ENCODE measurements at regions of chr2 and their contacts with region 1.

Region 1: GRCh38 chr2:241489733-241490680 is 18.4 kb downstream of the STK25 start:
- DNase-seq: no peak
- ATAC-seq: no peak
- H3K4me3 ChIP-seq: no peak overlapping the region
- H3K4me3 Mint-ChIP-seq: no peak overlapping the region
- H3K27ac ChIP-seq: no peak overlapping the region
- H3K27ac Mint-ChIP-seq: no peak overlapping the region
- H3K4me1 ChIP-seq: no peaks in the 10 kb centered on the region
- H3K4me1 Mint-ChIP-seq: no peaks in the 10 kb centered on the region
- H3K27me3 ChIP-seq: no peaks in the 10 kb centered on the region
- H3K27me3 Mint-ChIP-seq: no peaks in the 10 kb centered on the region

Region 2: GRCh38 chr2:241425368-241425767 is 64.6 kb before region 1 on chr2:
- CTCF ChIA-PET with region 1: no interaction called
- POLR2A ChIA-PET with region 1: interaction called in 1 of 2 experiments, 10 read pairs
- DNase-seq: no peak
- ATAC-seq: no peak
- H3K4me3 ChIP-seq: no peak overlapping the region
- H3K4me3 Mint-ChIP-seq: no peak overlapping the region
- H3K27ac ChIP-seq: no peak overlapping the region
- H3K27ac Mint-ChIP-seq: no peak overlapping the region
- H3K4me1 ChIP-seq: no peaks in the 10 kb centered on the region
- H3K4me1 Mint-ChIP-seq: peaks cover 0 to 7% (median 0%) of the 10 kb centered on the region in 3 donors
- H3K27me3 ChIP-seq: peaks cover 0 to 2% of the 10 kb centered on the region in 2 experiments
- H3K27me3 Mint-ChIP-seq: no peaks in the 10 kb centered on the region

Region 3: DNA sequence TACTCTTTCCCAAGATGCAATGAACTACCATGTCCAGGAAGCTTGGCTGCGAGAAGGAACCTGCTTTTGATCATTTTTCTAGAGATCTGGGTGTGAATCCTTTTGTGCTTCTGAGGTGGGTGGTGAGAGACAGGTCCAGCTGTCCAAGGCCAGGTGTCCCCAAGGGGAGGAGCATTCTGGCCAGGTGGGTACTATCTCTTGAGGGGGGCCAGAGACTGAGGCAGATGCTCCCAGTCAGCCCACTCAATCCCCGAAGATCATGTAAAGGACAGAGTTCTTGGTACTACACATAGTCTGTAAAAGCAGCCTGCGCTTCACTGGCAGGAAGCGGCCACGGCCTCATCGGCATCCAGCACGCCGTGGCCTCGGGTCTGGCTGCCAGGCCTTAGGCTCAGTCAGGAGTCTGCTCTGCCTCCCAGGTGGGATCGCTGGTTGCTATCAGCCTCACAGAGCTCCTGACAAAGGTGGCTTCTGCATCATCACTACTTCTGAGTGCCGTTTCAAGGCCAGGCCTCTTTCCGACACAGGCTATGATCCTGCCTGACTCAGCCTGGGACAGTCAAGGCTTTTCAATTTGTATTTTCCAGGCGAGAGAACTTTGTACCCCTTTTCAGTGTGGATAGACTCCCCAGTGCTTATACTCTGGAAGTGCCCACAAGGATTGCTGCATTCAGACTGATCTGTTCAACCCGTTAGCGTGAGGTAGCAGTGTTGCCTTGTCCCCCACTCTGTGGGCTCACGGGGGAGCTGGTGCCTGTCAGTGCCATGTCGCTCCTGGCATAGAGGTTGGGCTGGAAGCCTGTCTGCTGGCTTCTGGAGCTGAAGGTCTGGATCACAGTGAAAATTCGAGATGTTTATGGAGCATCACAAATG is 10.7 kb before region 1 on chr2:
- CTCF ChIA-PET with region 1: no interaction called
- POLR2A ChIA-PET with region 1: no interaction called
- DNase-seq: no peak
- ATAC-seq: no peak
- H3K4me3 ChIP-seq: no peak overlapping the region
- H3K4me3 Mint-ChIP-seq: no peak overlapping the region
- H3K27ac ChIP-seq: no peak overlapping the region
- H3K27ac Mint-ChIP-seq: no peak overlapping the region
- H3K4me1 ChIP-seq: no peaks in the 10 kb centered on the region
- H3K4me1 Mint-ChIP-seq: no peaks in the 10 kb centered on the region
- H3K27me3 ChIP-seq: peaks cover 0 to 15% of the 10 kb centered on the region in 2 experiments
- H3K27me3 Mint-ChIP-seq: no peaks in the 10 kb centered on the region

Measured in T-cell (primary cell).